Endothelial cell of umbilical vein (primary cell): ENCODE measurements at regions of chr16 and their contacts with region 1.

Region 1: GRCh38 chr16:85615852-85616606 is 2.9 kb downstream of the GSE1 start:
- DNase-seq: peak; percentile 49
- H3K4me3 ChIP-seq: no peak overlapping the region
- H3K27ac ChIP-seq: no peak overlapping the region
- H3K4me1 ChIP-seq: peaks cover 9% of the 10 kb centered on the region
- H3K27me3 ChIP-seq: no peaks in the 10 kb centered on the region
- CTCF ChIP-seq: peak; percentile 90 to 97
- POLR2A ChIP-seq: no peak

Region 2: GRCh38 chr16:85275533-85276249 is 340.3 kb before region 1 on chr16:
- CTCF ChIA-PET with region 1: interaction called, 37 read pairs
- POLR2A ChIA-PET with region 1: no interaction called
- dilution Hi-C with region 1: no loop called
- intact Hi-C with region 1: loop called (anchors 2 kb)
- DNase-seq: peak; percentile 51
- H3K4me3 ChIP-seq: no peak overlapping the region
- H3K27ac ChIP-seq: no peak overlapping the region
- H3K4me1 ChIP-seq: no peaks in the 10 kb centered on the region
- H3K27me3 ChIP-seq: no peaks in the 10 kb centered on the region
- CTCF ChIP-seq: peak; percentile 81 to 98
- POLR2A ChIP-seq: no peak

Region 3: DNA sequence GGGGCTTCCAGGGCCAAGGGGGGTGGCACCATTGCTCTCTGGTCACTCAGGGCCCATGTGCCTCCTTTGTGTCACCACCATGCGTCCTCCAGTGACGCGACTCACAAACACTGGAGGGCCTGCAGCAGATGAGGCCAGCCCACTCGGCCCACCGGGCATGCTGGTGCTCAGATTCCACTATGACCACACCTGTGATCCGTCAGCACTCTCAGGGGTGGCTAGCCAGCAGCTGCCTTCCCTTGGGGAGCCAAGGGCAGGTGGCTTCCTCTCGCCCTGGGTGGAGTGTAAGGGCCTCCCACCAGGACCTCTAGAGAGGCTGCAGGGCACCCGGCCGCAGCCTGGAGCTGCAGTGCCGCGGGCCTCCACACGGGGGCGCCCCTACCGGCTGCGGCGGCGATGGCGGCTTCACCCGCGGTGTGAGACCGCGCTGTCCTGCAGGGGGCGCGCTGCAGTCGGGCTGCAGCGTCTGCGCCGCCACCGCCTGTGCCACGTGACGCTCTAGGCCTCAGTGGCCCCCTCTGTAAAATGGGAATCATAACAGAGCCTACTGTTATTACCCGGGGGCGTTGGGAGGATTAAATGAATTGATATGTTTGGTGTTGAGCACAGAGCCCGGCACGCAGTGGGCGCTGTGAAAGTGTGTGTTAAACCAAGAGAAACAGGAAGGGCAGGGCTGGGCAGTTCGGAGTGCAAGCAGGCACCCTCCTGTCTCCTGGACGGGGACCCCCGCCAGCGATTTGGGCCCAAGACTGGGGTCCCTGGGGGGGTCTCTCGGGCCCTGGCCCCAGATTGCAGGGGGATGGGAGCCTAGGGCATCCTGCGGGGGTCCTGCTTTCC is 195.3 kb before region 1 on chr16:
- CTCF ChIA-PET with region 1: interaction called, 39 read pairs
- POLR2A ChIA-PET with region 1: no interaction called
- dilution Hi-C with region 1: no loop called
- intact Hi-C with region 1: no loop called
- DNase-seq: peak; percentile 30
- H3K4me3 ChIP-seq: no peak overlapping the region
- H3K27ac ChIP-seq: no peak overlapping the region
- H3K4me1 ChIP-seq: no peaks in the 10 kb centered on the region
- H3K27me3 ChIP-seq: no peaks in the 10 kb centered on the region
- CTCF ChIP-seq: peak; percentile 96 to 100
- POLR2A ChIP-seq: no peak

Region 4: DNA sequence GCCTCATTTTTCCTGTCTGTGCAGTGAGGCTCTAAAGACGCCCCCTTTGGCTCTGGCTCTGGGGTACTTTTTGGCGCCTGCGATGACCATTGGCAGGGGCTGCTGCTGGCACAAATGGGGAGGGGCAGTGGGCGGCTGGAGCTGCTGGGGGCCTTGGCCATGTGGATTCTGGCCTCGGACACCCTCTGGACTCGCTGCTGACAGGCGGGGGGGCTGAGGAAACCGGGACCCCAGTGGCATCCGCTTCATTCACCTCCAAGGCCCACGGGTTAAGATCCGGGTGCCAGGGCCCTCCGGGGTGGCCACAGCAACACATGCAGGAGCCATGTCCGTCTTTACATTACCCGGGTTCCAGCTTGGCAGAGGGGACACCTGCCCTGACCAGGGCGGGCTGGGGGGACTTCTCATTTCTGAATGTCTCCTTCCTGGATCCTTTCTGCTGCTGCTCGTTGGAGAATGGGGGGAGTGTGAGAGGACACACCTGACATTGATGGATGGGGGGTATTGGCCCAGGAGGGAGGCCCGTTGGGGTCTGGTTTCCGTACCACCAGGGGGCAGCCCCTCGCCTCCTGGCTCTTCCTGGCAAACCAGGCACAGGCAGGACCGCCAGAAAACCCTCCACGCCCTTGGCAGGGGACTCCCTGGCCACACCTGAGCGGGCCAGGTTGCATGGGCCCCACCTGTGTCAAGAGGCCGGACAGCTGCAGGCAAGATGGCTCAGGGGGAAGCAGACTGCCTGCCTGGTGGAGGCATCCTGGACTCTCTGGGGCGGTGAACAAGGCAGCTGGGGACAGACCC is 18.9 kb after region 1 on chr16:
- CTCF ChIA-PET with region 1: interaction called, 17 read pairs
- POLR2A ChIA-PET with region 1: no interaction called
- dilution Hi-C with region 1: no loop called
- intact Hi-C with region 1: no loop called
- DNase-seq: no peak
- H3K4me3 ChIP-seq: no peak overlapping the region
- H3K27ac ChIP-seq: no peak overlapping the region
- H3K4me1 ChIP-seq: no peaks in the 10 kb centered on the region
- H3K27me3 ChIP-seq: no peaks in the 10 kb centered on the region
- CTCF ChIP-seq: peak; percentile 6
- POLR2A ChIP-seq: no peak